ENCODE measurements at regions of chr14 and their contacts with region 1.

Region 1: GRCh38 chr14:21014761-21015190 is 10.1 kb downstream of the NDRG2 start:
- DNase-seq: peak; percentile 56 to 82 (median 76)
- ATAC-seq: peak; percentile 88
- H3K4me3 ChIP-seq: no peak overlapping the region
- H3K4me3 Mint-ChIP-seq: no peak overlapping the region
- H3K27ac ChIP-seq: no peak overlapping the region
- H3K27ac Mint-ChIP-seq: peak overlapping the region in 1 of 9 donors; percentile 17
- H3K4me1 ChIP-seq: no peaks in the 10 kb centered on the region
- H3K4me1 Mint-ChIP-seq: peaks cover 0 to 5% (median 0%) of the 10 kb centered on the region in 7 donors
- H3K27me3 ChIP-seq: no peaks in the 10 kb centered on the region
- H3K27me3 Mint-ChIP-seq: peaks cover 12 to 29% (median 21%) of the 10 kb centered on the region in 5 donors

Region 2: GRCh38 chr14:20019257-20019865 is 995.4 kb before region 1 on chr14 and contains the start of gene OR4K14:
- CTCF ChIA-PET with region 1: no interaction called
- POLR2A ChIA-PET with region 1: no interaction called
- intact Hi-C with region 1: no loop called
- DNase-seq: no peak
- ATAC-seq: no peak
- H3K4me3 ChIP-seq: no peak within 1 kb of the TSS
- H3K4me3 Mint-ChIP-seq: no peak within 1 kb of the TSS
- H3K27ac ChIP-seq: no peak within 1 kb of the TSS
- H3K27ac Mint-ChIP-seq: no peak within 1 kb of the TSS
- H3K4me1 ChIP-seq: no peaks in the 10 kb centered on the region
- H3K4me1 Mint-ChIP-seq: peaks cover 0 to 2% (median 0%) of the 10 kb centered on the region in 7 donors
- H3K27me3 ChIP-seq: no peaks in the 10 kb centered on the region
- H3K27me3 Mint-ChIP-seq: peaks cover 0 to 14% (median 3%) of the 10 kb centered on the region in 5 donors
- total RNA-seq, gene OR4K14: not detected

Region 3: DNA sequence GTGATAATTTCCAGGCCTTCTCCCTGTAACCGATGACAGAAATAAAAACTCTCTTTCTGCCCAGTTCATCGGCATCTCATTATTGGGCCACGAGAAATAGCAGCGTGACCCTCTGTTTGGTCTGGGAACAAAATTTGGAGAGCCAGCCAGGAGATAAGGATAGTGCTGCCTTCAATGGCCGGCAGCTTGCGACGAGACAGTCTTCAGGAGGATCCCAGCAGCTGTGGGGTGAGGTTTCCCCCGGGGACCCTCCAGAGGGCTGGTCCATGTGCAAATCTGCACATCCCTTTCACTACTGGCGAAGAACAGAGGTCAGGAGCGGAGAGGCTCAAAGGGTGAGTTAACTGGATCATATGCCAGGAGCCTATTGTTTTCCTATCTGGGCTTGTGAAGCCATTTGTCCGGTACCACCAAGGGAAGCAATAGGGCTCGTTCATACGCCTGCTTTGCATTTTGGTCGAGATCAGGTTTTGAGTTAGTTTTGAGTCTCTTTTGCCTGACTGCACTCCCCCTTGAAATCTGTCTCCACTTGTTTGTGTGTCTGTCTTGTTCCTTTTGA is 10.9 kb before region 1 on chr14:
- CTCF ChIA-PET with region 1: interaction called, 21 read pairs
- POLR2A ChIA-PET with region 1: interaction called, 3 read pairs
- intact Hi-C with region 1: no loop called
- DNase-seq: no peak
- ATAC-seq: no peak
- H3K4me3 ChIP-seq: no peak overlapping the region
- H3K4me3 Mint-ChIP-seq: no peak overlapping the region
- H3K27ac ChIP-seq: no peak overlapping the region
- H3K27ac Mint-ChIP-seq: peak overlapping the region in 1 of 9 donors; percentile 7
- H3K4me1 ChIP-seq: no peaks in the 10 kb centered on the region
- H3K4me1 Mint-ChIP-seq: peaks cover 0 to 7% (median 0%) of the 10 kb centered on the region in 7 donors
- H3K27me3 ChIP-seq: no peaks in the 10 kb centered on the region
- H3K27me3 Mint-ChIP-seq: no peaks in the 10 kb centered on the region

Region 4: GRCh38 chr14:21039585-21040369 is 25.0 kb after region 1 on chr14:
- CTCF ChIA-PET with region 1: interaction called, 178 read pairs
- POLR2A ChIA-PET with region 1: interaction called, 21 read pairs
- intact Hi-C with region 1: loop called (anchors 1 kb)
- DNase-seq: peak in 7 of 9 donors; percentile 17 to 55 (median 46)
- ATAC-seq: peak; percentile 69
- H3K4me3 ChIP-seq: no peak overlapping the region
- H3K4me3 Mint-ChIP-seq: no peak overlapping the region
- H3K27ac ChIP-seq: no peak overlapping the region
- H3K27ac Mint-ChIP-seq: no peak overlapping the region
- H3K4me1 ChIP-seq: no peaks in the 10 kb centered on the region
- H3K4me1 Mint-ChIP-seq: peaks cover 2 to 9% (median 8%) of the 10 kb centered on the region in 7 donors
- H3K27me3 ChIP-seq: no peaks in the 10 kb centered on the region
- H3K27me3 Mint-ChIP-seq: peaks cover 3 to 31% (median 11%) of the 10 kb centered on the region in 5 donors

Region 5: GRCh38 chr14:21071225-21072030 is 56.7 kb after region 1 on chr14:
- CTCF ChIA-PET with region 1: interaction called, 8 read pairs
- POLR2A ChIA-PET with region 1: no interaction called
- intact Hi-C with region 1: loop called (anchors 2 kb)
- DNase-seq: peak in 1 of 9 donors; percentile 36
- ATAC-seq: peak; percentile 63
- H3K4me3 ChIP-seq: peak overlapping the region; percentile 43
- H3K4me3 Mint-ChIP-seq: peak overlapping the region; percentile 69 to 90 (median 82)
- H3K27ac ChIP-seq: no peak overlapping the region
- H3K27ac Mint-ChIP-seq: peak overlapping the region in 5 of 9 donors; percentile 51 to 76 (median 54)
- H3K4me1 ChIP-seq: peaks cover 21 to 29% of the 10 kb centered on the region in 2 donors
- H3K4me1 Mint-ChIP-seq: peaks cover 23 to 40% (median 35%) of the 10 kb centered on the region in 7 donors
- H3K27me3 ChIP-seq: peaks cover 20 to 36% of the 10 kb centered on the region in 2 donors
- H3K27me3 Mint-ChIP-seq: peaks cover 51 to 69% (median 61%) of the 10 kb centered on the region in 5 donors

Measured in naive thymus-derived CD4-positive, alpha-beta T cell (primary cell).